ENCODE measurements at regions of chr12 and their contacts with region 1.

Region 1: GRCh38 chr12:40325349-40325960 is 100.7 kb downstream of the LRRK2 start:
- DNase-seq: no peak
- H3K4me3 ChIP-seq: no peak overlapping the region
- H3K27ac ChIP-seq: no peak overlapping the region
- H3K4me1 ChIP-seq: no peaks in the 10 kb centered on the region
- H3K27me3 ChIP-seq: no peaks in the 10 kb centered on the region
- CTCF ChIP-seq: peak in 2 of 3 experiments; percentile 54 to 76; a peak in 3 of 4 replicates
- EP300 ChIP-seq: no peak
- POLR2A ChIP-seq: no peak
- RAD21 ChIP-seq: peak; percentile 73 to 76

Region 2: GRCh38 chr12:40271981-40272664 is 53.3 kb before region 1 on chr12:
- CTCF ChIA-PET with region 1: no interaction called
- POLR2A ChIA-PET with region 1: no interaction called
- DNase-seq: no peak
- H3K4me3 ChIP-seq: no peak overlapping the region
- H3K27ac ChIP-seq: no peak overlapping the region
- H3K4me1 ChIP-seq: no peaks in the 10 kb centered on the region
- H3K27me3 ChIP-seq: no peaks in the 10 kb centered on the region
- CTCF ChIP-seq: no peak
- EP300 ChIP-seq: no peak
- POLR2A ChIP-seq: no peak
- RAD21 ChIP-seq: no peak

Region 3: GRCh38 chr12:40312982-40313576 is 12.4 kb before region 1 on chr12:
- CTCF ChIA-PET with region 1: interaction called, 26 read pairs
- POLR2A ChIA-PET with region 1: no interaction called
- DNase-seq: no peak
- H3K4me3 ChIP-seq: no peak overlapping the region
- H3K27ac ChIP-seq: no peak overlapping the region
- H3K4me1 ChIP-seq: no peaks in the 10 kb centered on the region
- H3K27me3 ChIP-seq: peaks cover 0 to 1% (median 0%) of the 10 kb centered on the region in 4 experiments; a peak in 1 of 7 replicates
- CTCF ChIP-seq: peak in 1 of 3 experiments; percentile 24; a peak in 1 of 4 replicates
- EP300 ChIP-seq: no peak
- POLR2A ChIP-seq: no peak
- RAD21 ChIP-seq: peak in 1 of 2 experiments; percentile 63; a peak in 3 of 4 replicates

Region 4: DNA sequence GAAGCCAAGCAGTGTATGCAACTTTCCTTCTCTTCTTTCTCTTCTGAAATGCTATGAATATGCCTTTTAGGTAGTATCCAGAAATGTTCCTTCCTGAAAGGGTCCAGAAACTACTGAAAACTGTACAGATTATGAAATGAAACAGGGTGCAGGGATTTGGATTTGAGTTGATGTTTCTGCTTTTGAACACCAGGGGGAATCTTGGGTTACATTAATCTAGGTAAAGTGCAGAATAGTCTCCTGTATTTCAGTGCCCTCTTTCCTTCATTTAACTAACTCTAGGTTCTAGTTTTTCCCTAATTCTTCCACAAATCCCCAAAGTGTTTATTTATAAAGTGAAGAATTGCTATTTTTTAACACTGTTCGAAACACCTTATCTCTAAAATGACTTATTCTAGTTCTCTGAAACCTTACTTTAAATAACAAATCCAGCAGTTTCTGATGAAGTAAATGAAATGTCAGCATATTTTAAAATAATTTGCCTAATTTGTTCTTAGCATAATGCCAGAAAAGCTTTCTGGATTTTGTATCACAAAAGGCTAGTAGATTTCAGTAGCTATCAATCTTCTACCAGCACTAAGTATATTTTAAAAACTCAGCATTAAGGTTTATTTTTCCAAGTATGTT is 11.2 kb after region 1 on chr12:
- CTCF ChIA-PET with region 1: interaction called, 19 read pairs
- POLR2A ChIA-PET with region 1: no interaction called
- DNase-seq: no peak
- H3K4me3 ChIP-seq: no peak overlapping the region
- H3K27ac ChIP-seq: no peak overlapping the region
- H3K4me1 ChIP-seq: no peaks in the 10 kb centered on the region
- H3K27me3 ChIP-seq: no peaks in the 10 kb centered on the region
- CTCF ChIP-seq: peak in 2 of 3 experiments; percentile 33 to 46; a peak in 2 of 4 replicates
- EP300 ChIP-seq: no peak
- POLR2A ChIP-seq: no peak
- RAD21 ChIP-seq: peak; percentile 52 to 55